ENCODE measurements at regions of chr19 and their contacts with region 1.

Region 1: DNA sequence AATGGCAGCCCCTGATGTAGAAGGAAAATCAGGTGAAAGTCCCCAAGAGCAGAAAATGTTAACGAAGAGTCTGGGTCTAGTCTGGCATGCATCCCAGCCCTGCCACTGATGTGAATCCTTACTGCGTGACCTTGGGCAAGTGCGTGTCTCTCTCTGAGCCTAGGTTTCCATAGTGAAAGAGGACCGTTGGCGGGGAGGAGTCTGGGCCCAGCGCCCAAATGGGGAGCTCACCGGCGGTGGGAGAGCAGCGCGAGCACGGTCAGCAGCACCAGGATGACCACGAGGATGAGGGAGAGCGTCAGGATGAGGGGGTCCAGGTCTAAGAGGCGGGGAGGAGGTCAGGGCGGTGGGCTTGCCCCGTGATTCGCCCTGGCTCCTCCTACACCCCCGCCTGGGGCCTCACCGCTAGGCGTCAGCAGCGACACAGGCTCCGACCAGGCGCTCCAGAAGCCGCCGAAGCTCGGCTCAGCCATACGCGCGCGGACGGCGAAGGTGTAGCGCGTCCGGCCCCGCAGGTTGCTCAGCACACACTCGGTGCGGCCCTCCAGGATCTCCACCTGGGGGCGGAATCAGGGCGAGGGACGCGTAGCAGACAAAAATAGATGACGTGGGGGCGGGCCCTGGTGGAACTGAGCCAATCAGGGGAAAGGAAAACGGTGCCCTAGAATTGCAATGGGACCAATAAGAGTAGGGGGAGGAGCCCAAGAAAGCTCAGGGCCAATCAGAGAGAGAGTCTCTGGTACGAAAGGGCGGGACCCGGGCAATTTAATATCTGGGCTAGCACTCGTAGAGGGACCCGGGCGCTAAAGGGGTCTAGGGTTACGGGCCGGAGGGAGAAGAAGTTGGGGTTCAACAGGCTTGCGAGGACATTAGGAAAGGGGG is 3.2 kb downstream of the EPOR start:
- DNase-seq: peak; percentile 65
- H3K4me3 ChIP-seq: peak overlapping the region; percentile 75
- CTCF ChIP-seq: peak; percentile 80

Region 2: GRCh38 chr19:11293433-11294389 is 87.2 kb before region 1 on chr19:
- CTCF ChIA-PET with region 1: interaction called, 18 read pairs
- POLR2A ChIA-PET with region 1: interaction called, 4 read pairs
- DNase-seq: peak; percentile 37
- H3K4me3 ChIP-seq: peak overlapping the region; percentile 42
- CTCF ChIP-seq: peak; percentile 99

Region 3: DNA sequence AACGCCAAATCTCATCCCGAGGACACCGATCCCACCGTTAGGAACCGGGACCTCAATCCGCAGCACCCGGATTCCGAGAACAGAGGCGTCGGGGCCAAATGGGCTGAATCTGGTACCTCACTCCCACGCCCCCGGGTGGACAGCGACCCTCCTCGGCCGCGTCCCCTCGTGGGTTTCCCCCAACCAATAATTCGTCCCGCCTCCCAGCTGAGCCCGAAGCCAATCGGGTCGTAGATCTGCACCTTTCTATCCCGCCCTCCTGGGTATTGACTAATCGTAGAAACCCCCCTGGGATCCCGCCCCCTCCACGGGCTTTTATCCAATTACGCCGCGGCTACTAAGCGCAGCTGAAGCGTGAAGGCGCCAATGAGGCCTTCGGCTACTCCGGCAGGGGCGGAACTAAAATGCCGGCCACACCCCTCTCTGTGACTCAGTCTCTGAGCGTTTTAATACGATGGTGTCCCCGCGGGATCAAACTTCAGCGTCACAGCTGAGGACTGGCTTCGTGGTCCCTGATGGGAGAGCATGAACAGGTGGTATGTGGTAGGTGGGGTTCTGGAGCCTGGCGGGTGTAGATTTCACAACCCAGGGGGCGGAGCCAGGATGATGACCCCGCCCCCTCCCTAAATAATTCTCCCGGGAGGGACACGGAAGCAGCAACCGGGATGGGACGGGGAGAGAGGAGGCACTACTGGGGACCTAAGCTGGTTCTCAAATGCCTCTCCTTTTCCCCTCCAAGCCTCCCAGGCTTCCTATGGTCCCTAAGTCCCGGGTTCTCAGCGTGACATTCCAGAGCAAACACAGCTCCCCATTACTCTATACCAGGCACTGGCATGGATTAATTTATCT is 34.6 kb before region 1 on chr19 and contains the starts of genes CCDC159 and TMEM205:
- CTCF ChIA-PET with region 1: interaction called, 15 read pairs
- POLR2A ChIA-PET with region 1: interaction called, 5 read pairs
- DNase-seq: peak; percentile 95
- H3K4me3 ChIP-seq: peak within 1 kb of the TSS; percentile 90
- CTCF ChIP-seq: peak; percentile 12

Region 4: DNA sequence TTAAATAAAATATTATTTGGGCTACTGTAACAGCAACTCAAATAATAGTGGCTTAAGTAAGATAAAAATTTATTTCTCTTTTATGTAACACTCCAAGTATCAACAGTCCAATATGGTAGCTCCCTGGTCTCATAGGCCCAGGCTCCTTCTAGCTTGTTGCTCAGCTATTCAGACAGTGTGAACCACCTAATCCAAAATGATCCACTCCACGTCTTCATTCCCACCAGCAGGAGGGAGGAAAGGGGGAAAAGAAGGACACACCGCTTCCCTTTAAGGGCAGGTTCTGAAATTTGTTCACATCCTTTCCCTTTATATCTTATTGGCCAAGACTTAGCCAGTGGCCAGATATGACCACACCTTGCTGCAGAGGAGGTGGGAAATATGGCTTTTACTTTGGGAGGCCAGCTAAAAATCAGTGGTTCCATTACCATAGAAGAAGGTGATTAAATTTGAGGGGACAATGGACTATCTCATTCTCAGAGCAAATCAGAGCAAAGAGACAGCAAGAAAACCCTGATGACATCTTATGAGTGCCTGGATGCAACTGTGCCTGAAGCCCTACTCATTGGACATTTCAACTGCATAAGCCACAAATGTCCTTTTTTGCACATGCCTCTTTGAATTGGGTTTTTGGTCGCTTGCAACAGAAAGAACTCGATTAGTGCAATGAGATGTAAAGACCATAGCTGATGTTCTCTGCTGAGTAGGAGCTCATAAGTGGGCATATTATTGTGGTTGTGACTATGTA is 10.2 kb after region 1 on chr19:
- CTCF ChIA-PET with region 1: interaction called, 45 read pairs
- POLR2A ChIA-PET with region 1: interaction called, 4 read pairs
- DNase-seq: no peak
- H3K4me3 ChIP-seq: no peak overlapping the region
- CTCF ChIP-seq: no peak

Region 5: GRCh38 chr19:11422163-11423021 is 41.5 kb after region 1 on chr19:
- CTCF ChIA-PET with region 1: interaction called, 10 read pairs
- POLR2A ChIA-PET with region 1: no interaction called
- DNase-seq: no peak
- H3K4me3 ChIP-seq: peak overlapping the region; percentile 20
- CTCF ChIP-seq: no peak

Measured in AG04449 (cell line).